ENCODE measurements at regions of chr11 and their contacts with region 1.

Region 1: DNA sequence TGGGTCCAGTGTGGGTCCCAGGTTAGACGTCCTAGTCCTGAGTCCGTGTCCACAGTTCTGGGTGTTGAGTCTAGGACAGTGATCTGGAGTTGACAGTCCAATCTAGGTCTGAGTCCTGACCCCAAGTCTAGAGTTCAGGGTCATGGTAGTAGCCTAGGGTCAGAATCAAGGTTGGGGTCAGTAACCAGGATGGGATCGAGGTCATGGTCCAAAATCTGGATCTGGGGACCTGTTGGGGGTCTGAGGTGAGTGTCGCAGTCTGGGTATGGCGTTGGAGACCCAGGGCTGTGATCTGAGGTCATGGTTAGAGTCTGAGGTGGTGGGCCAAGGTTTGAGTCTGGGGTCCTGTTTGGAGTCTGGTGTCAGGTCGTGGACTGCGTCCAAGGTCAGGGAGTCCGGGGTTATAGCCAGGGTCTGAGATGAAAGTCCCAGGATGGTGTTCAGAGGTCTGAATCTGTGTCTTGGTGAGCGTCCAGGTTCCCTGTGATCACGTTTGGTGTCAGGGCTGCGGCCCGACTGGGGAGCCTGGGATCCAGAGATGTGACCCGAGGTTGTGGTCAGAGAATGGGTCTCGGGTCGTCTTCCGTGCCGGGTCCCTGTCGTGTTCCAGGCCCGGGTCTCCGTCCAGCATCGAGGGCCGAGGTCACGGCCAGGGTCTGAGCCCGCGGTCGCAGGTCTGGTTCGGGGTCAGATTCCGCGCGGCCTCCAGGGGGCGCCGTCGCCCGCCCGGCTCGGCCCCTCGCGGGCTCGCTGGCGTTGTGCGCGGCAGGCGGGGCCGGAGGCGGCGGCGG is 445 bp upstream of the GRK2 start:
- DNase-seq: peak; percentile 63 to 79 (median 71)
- H3K4me3 ChIP-seq: peak overlapping the region in 1 of 3 experiments; percentile 51
- H3K4me3 Mint-ChIP-seq: peak overlapping the region; percentile 73 to 77
- H3K27ac ChIP-seq: no peak overlapping the region
- H3K27ac Mint-ChIP-seq: peak overlapping the region; percentile 40 to 93 (median 81)
- H3K4me1 ChIP-seq: peaks cover 62 to 90% of the 10 kb centered on the region in 2 donors
- H3K4me1 Mint-ChIP-seq: peaks cover 77% of the 10 kb centered on the region
- H3K27me3 ChIP-seq: peaks cover 0 to 3% of the 10 kb centered on the region in 2 donors
- H3K27me3 Mint-ChIP-seq: peaks cover 8 to 17% (median 16%) of the 10 kb centered on the region in 3 donors
- CTCF ChIP-seq: peak; percentile 63

Region 2: DNA sequence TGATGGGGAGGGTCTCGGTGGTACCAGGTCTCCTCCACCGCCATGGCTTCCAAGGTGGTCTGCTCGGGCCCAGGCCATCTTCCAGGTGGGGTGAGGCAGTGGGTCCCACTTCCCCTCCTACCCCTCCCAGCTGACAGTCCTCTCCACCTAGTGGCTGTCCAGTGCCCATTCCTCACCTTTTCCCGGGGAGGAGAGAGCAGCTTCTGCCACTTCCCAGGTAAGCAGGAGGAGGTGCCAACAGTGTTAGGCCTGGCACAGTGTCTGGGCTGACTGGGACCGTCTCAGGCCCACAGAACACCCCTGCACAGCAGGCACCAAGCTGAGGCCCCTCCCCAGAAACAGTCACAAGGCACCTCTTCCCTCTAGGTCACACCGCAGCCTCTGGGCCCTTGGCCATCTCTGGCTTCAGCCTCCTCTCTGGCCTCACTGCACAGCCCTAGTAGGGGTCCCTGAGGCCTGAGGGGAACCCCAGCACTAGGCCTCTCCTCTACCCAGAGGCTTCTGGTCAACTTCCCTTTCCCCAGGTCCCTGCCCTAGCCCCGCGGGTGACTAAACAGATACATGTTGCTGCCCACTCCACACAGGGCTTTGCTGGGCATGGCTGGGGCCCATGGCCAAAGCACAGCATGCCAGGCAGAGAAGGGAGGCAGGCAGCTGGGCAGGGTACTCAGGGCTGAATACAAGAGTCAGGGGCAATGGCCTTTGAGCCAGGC is 20.9 kb after region 1 on chr11:
- intact Hi-C with region 1: loop called (anchors 2 kb)
- DNase-seq: peak; percentile 89 to 94 (median 89)
- H3K4me3 ChIP-seq: peak overlapping the region; percentile 25 to 83 (median 54)
- H3K4me3 Mint-ChIP-seq: peak overlapping the region; percentile 80 to 91
- H3K27ac ChIP-seq: peak overlapping the region; percentile 92 to 99
- H3K27ac Mint-ChIP-seq: peak overlapping the region; percentile 98 to 100 (median 99)
- H3K4me1 ChIP-seq: peaks cover 88 to 95% of the 10 kb centered on the region in 2 donors
- H3K4me1 Mint-ChIP-seq: peaks cover 81% of the 10 kb centered on the region
- H3K27me3 ChIP-seq: no peaks in the 10 kb centered on the region
- H3K27me3 Mint-ChIP-seq: peaks cover 0 to 10% (median 6%) of the 10 kb centered on the region in 3 donors
- CTCF ChIP-seq: no peak

Region 3: DNA sequence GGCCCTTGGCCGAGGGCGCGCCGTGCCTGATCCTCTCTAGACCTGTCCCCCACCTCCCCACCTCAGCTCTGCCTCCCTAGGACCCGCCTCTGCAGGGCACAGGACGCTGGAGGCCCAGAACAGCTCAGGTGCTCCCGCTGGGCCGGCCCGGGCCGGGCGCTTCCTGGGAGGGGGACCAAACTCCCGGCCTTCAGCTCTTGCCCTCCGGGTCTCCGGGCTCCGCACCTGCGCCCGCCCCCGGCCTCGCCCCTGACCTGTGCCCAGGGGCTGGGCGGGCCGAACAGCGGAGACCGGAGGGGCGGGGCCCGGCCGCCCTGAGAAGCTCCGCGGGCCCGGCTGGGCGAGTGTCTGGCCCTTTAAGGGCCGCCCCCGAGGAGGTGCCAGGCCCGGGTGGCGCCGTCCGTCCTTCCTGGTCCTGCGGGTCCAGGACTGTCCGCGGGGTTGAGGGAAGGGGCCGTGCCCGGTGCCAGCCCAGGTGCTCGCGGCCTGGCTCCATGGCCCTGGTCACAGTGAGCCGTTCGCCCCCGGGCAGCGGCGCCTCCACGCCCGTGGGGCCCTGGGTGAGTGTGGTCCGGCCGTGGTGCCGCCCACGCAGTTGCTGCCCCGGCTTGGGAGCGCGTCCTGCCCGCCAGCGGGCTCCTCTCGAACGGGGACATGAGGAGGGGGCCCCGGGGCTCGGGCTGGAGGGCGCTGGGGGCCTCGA is 37.5 kb after region 1 on chr11 and contains the start of gene SSH3:
- intact Hi-C with region 1: loop called in 1 of 2 experiments (anchors 5 kb)
- DNase-seq: peak in 2 of 3 donors; percentile 24 to 47
- H3K4me3 ChIP-seq: peak within 1 kb of the TSS; percentile 40 to 86 (median 66)
- H3K4me3 Mint-ChIP-seq: peak within 1 kb of the TSS; percentile 79 to 85
- H3K27ac ChIP-seq: peak within 1 kb of the TSS; percentile 64 to 78
- H3K27ac Mint-ChIP-seq: peak within 1 kb of the TSS; percentile 75 to 92 (median 89)
- H3K4me1 ChIP-seq: peaks cover 44 to 64% of the 10 kb centered on the region in 2 donors
- H3K4me1 Mint-ChIP-seq: peaks cover 52% of the 10 kb centered on the region
- H3K27me3 ChIP-seq: no peaks in the 10 kb centered on the region
- H3K27me3 Mint-ChIP-seq: no peaks in the 10 kb centered on the region
- CTCF ChIP-seq: no peak
- polyA plus RNA-seq, gene SSH3: 3.6 to 23.3 (median 5.8) TPM

Region 4: GRCh38 chr11:67317205-67317887 is 51.5 kb after region 1 on chr11:
- intact Hi-C with region 1: loop called (anchors 1 kb)
- DNase-seq: peak; percentile 92 to 98 (median 95)
- H3K4me3 ChIP-seq: peak overlapping the region; percentile 63 to 91 (median 85)
- H3K4me3 Mint-ChIP-seq: peak overlapping the region; percentile 93 to 99
- H3K27ac ChIP-seq: peak overlapping the region; percentile 61 to 67
- H3K27ac Mint-ChIP-seq: peak overlapping the region; percentile 89 to 97 (median 95)
- H3K4me1 ChIP-seq: peaks cover 34 to 40% of the 10 kb centered on the region in 2 donors
- H3K4me1 Mint-ChIP-seq: peaks cover 33% of the 10 kb centered on the region
- H3K27me3 ChIP-seq: peaks cover 0 to 4% of the 10 kb centered on the region in 2 donors
- H3K27me3 Mint-ChIP-seq: peaks cover 4 to 17% (median 12%) of the 10 kb centered on the region in 3 donors
- CTCF ChIP-seq: peak; percentile 88

Region 5: GRCh38 chr11:67373925-67374618 is 108.2 kb after region 1 on chr11:
- intact Hi-C with region 1: loop called in 1 of 2 experiments (anchors 5 kb)
- DNase-seq: peak; percentile 90 to 98 (median 91)
- H3K4me3 ChIP-seq: peak overlapping the region; percentile 35 to 82 (median 51)
- H3K4me3 Mint-ChIP-seq: peak overlapping the region; percentile 88 to 92
- H3K27ac ChIP-seq: peak overlapping the region; percentile 25 to 77
- H3K27ac Mint-ChIP-seq: peak overlapping the region; percentile 80 to 96 (median 94)
- H3K4me1 ChIP-seq: peaks cover 50 to 60% of the 10 kb centered on the region in 2 donors
- H3K4me1 Mint-ChIP-seq: peaks cover 54% of the 10 kb centered on the region
- H3K27me3 ChIP-seq: no peaks in the 10 kb centered on the region
- H3K27me3 Mint-ChIP-seq: peaks cover 8 to 17% (median 10%) of the 10 kb centered on the region in 3 donors
- CTCF ChIP-seq: peak; percentile 71

Region 6: GRCh38 chr11:67382276-67383136 is 116.7 kb after region 1 on chr11:
- intact Hi-C with region 1: loop called in 1 of 2 experiments (anchors 5 kb)
- DNase-seq: peak; percentile 70 to 84 (median 80)
- H3K4me3 ChIP-seq: peak overlapping the region in 1 of 3 experiments; percentile 64
- H3K4me3 Mint-ChIP-seq: peak overlapping the region in 1 of 2 donors; percentile 49
- H3K27ac ChIP-seq: no peak overlapping the region
- H3K27ac Mint-ChIP-seq: peak overlapping the region; percentile 0 to 95 (median 89)
- H3K4me1 ChIP-seq: peaks cover 48 to 54% of the 10 kb centered on the region in 2 donors
- H3K4me1 Mint-ChIP-seq: peaks cover 49% of the 10 kb centered on the region
- H3K27me3 ChIP-seq: no peaks in the 10 kb centered on the region
- H3K27me3 Mint-ChIP-seq: peaks cover 0 to 4% (median 2%) of the 10 kb centered on the region in 3 donors
- CTCF ChIP-seq: peak; percentile 92

Measured in CD14-positive monocyte (primary cell).